ENCODE measurements at regions of chr17 and their contacts with region 1.

Region 1: GRCh38 chr17:57849874-57850754 is at the start of gene MRPS23:
- DNase-seq: peak; percentile 97
- total RNA-seq, gene MRPS23: 57.0 and 71.5 TPM in 2 replicates

Region 2: GRCh38 chr17:57739402-57740392 is 110.4 kb before region 1 on chr17:
- in situ Hi-C with region 1: no loop called
- DNase-seq: peak; percentile 21

Region 3: DNA sequence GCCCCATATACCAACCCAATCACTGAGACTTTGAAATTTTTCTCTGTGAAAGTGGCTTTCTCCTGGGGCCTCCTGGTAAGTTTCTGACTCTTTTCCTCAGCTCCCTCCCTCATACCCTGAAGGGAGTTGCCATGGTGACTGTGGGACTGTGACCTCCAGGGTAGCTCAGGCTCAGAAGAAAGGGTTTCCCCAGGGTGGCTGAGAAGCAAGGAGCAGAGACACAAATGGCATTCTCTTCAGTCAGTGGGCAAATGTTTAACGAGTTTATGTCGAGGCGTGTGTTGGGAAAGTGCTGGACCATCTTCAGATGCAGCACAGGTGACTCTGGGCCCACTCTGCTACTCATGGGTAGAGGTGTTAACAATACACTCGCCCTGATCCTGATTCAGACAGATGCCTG is 47.1 kb before region 1 on chr17:
- in situ Hi-C with region 1: no loop called
- DNase-seq: no peak

Region 4: GRCh38 chr17:57995076-57995956 is 145.2 kb after region 1 on chr17:
- in situ Hi-C with region 1: loop called (anchors 10 kb)
- DNase-seq: peak; percentile 71

Measured in Caki2 (cell line).